Ascending aorta (tissue), 2 donors: ENCODE measurements at regions of chr19 and their contacts with region 1.

Region 1: DNA sequence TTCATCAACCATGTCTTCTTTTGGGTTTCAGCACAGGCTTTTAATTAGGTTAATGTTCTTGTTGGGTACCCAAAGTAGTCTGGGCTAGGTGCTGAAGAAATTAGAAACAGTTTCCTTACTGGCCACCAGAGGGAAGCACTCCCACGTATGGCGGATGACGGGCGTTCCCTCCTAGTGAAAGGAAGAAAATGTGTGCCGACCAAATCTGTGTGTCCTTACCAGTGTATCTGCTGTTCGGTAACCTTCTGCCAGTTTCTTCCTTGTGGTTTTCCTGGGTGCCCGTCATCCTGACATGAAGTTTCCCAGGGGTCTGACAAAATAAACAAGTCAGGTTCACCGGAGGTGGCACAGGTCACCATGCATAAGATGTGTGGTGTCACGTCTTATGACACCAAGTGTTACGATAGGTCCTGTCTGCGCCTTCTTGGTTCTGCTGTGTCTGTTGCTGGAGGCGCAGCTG is 6.0 kb upstream of the WDR88 start:
- DNase-seq: no peak
- H3K4me3 ChIP-seq: no peak overlapping the region
- H3K27ac ChIP-seq: no peak overlapping the region
- H3K4me1 ChIP-seq: no peaks in the 10 kb centered on the region
- H3K27me3 ChIP-seq: no peaks in the 10 kb centered on the region
- CTCF ChIP-seq: peak; percentile 54 to 77 (median 75)

Region 2: GRCh38 chr19:33186431-33187182 is 60.6 kb after region 1 on chr19:
- intact Hi-C with region 1: loop called (anchors 2 kb)
- DNase-seq: no peak
- H3K4me3 ChIP-seq: no peak overlapping the region
- H3K27ac ChIP-seq: no peak overlapping the region
- H3K4me1 ChIP-seq: peaks cover 0 to 5% of the 10 kb centered on the region in 2 donors
- H3K27me3 ChIP-seq: no peaks in the 10 kb centered on the region
- CTCF ChIP-seq: no peak